ENCODE measurements at regions of chr7 and their contacts with region 1.

Region 1: DNA sequence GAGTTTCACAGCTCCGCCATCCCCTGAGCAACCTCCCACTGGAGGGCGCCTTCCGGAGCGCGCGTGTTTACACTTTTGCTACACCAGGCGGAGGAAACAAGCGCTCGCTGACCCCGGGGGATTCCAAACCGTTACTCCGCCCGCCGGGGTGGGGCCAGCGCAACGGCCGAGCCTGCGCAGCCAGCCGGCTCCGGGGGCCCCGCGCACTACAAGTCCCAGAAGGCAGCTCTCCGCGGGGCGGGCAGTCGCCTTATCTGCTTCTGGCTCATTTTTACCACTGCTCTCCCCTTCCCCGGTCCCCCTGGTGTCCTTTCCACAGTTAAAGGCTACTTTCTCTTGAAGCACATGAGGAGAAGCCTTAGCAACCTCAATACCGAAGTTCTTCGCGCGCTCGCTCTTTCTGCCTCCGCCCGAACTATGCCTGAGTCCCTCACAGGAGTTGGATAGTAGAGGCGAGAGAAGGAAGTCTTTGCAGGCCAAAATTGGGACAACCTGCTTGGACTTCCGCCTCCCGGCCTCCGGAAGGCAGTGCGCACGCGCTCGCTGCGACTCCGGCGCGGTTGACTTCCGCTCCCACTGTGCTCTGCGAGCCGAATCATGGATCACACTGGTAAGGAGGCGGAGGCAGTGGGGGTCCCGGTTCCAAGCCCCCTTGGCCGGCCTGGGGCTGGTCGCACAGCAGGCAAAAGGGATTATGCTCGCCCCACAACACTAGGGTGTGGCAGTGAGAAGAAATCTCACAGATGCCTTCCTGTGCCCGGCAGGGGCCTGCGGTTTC is at the start of gene CBLL1:
- DNase-seq: peak; percentile 95 to 98 (median 97)
- ATAC-seq: peak; percentile 95
- H3K4me3 ChIP-seq: peak within 1 kb of the TSS; percentile 90
- H3K4me3 Mint-ChIP-seq: peak within 1 kb of the TSS; percentile 93 to 100 (median 98)
- H3K27ac ChIP-seq: peak within 1 kb of the TSS; percentile 99
- H3K27ac Mint-ChIP-seq: peak within 1 kb of the TSS; percentile 99 to 100 (median 100)
- H3K4me1 ChIP-seq: peaks cover 35 to 36% of the 10 kb centered on the region in 2 donors
- H3K4me1 Mint-ChIP-seq: peaks cover 28 to 58% (median 54%) of the 10 kb centered on the region in 7 donors
- H3K27me3 ChIP-seq: no peaks in the 10 kb centered on the region
- H3K27me3 Mint-ChIP-seq: peaks cover 0 to 3% (median 0%) of the 10 kb centered on the region in 5 donors
- total RNA-seq, gene CBLL1: 41.5 to 54.4 (median 51.1) TPM

Region 2: GRCh38 chr7:107044347-107045194 is 699.2 kb before region 1 on chr7 and contains the start of gene PRKAR2B:
- CTCF ChIA-PET with region 1: no interaction called
- POLR2A ChIA-PET with region 1: no interaction called
- intact Hi-C with region 1: loop called in 1 of 2 experiments (anchors 1 kb)
- DNase-seq: peak; percentile 69 to 81 (median 79)
- ATAC-seq: peak; percentile 96
- H3K4me3 ChIP-seq: peak within 1 kb of the TSS; percentile 53
- H3K4me3 Mint-ChIP-seq: peak within 1 kb of the TSS; percentile 78 to 96 (median 90)
- H3K27ac ChIP-seq: peak within 1 kb of the TSS; percentile 33
- H3K27ac Mint-ChIP-seq: peak within 1 kb of the TSS in 7 of 9 donors; percentile 48 to 89 (median 77)
- H3K4me1 ChIP-seq: peaks cover 4 to 10% of the 10 kb centered on the region in 2 donors
- H3K4me1 Mint-ChIP-seq: peaks cover 11 to 19% (median 15%) of the 10 kb centered on the region in 7 donors
- H3K27me3 ChIP-seq: peaks cover 4 to 8% of the 10 kb centered on the region in 2 donors
- H3K27me3 Mint-ChIP-seq: peaks cover 13 to 47% (median 29%) of the 10 kb centered on the region in 5 donors
- total RNA-seq, gene PRKAR2B: 0.43 to 5.0 (median 0.67) TPM

Region 3: DNA sequence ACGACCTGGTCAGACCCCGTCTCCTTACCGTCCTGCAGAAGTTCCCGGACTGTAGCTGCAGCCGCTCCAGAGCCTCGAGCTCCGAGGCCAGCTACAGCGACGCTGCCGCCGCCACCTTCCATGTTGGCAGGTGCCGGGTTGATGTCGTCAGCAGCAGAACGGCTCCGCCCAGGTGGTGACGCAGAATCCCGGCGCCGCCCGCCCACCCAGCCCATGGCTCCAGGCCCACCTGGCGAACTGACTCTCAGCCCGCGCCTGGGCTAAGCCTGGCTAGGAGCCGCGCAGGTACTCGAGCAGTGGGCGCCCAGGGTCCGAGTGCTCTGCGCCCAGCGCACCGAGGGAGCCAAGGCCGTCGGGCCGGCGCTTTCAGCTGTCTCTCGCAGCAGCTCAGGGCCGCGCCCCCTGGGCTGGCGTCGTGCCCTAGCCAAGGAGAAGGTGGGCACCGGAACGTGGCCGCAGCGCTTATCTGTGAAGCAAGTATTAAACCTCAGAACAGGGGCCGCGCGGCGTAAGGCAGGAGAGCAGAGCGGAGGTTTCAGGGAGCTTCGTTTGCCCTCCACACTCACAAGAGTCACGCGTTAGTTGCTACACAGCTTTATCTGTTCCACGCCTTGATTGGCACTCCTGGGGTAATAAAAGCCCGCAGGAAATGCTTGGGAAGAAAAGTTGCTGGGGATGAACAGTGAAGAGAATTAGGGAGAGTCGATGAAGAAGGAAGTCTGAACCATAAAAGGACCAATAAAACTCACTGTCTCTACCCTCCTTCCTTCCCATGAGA is 179.8 kb before region 1 on chr7 and contains the starts of genes COG5 and DUS4L:
- CTCF ChIA-PET with region 1: interaction called, 4 read pairs
- POLR2A ChIA-PET with region 1: interaction called, 15 read pairs
- intact Hi-C with region 1: loop called (anchors 1 kb)
- DNase-seq: peak; percentile 78 to 88 (median 84)
- ATAC-seq: peak; percentile 91
- H3K4me3 ChIP-seq: peak within 1 kb of the TSS; percentile 86
- H3K4me3 Mint-ChIP-seq: peak within 1 kb of the TSS; percentile 76 to 99 (median 91)
- H3K27ac ChIP-seq: peak within 1 kb of the TSS; percentile 98
- H3K27ac Mint-ChIP-seq: peak within 1 kb of the TSS; percentile 87 to 97 (median 93)
- H3K4me1 ChIP-seq: peaks cover 40 to 50% of the 10 kb centered on the region in 2 donors
- H3K4me1 Mint-ChIP-seq: peaks cover 40 to 76% (median 62%) of the 10 kb centered on the region in 7 donors
- H3K27me3 ChIP-seq: no peaks in the 10 kb centered on the region
- H3K27me3 Mint-ChIP-seq: no peaks in the 10 kb centered on the region
- total RNA-seq, gene COG5: 38.3 to 77.0 (median 60.7) TPM
- total RNA-seq, gene DUS4L: 10.0 to 14.1 (median 11.2) TPM

Region 4: GRCh38 chr7:107725151-107725740 is 18.5 kb before region 1 on chr7:
- CTCF ChIA-PET with region 1: interaction called, 5 read pairs
- POLR2A ChIA-PET with region 1: interaction called, 3 read pairs
- intact Hi-C with region 1: loop called in 1 of 2 experiments (anchors 1 kb)
- DNase-seq: peak in 7 of 9 donors; percentile 23 to 56 (median 46)
- ATAC-seq: no peak
- H3K4me3 ChIP-seq: no peak overlapping the region
- H3K4me3 Mint-ChIP-seq: no peak overlapping the region
- H3K27ac ChIP-seq: no peak overlapping the region
- H3K27ac Mint-ChIP-seq: no peak overlapping the region
- H3K4me1 ChIP-seq: no peaks in the 10 kb centered on the region
- H3K4me1 Mint-ChIP-seq: no peaks in the 10 kb centered on the region
- H3K27me3 ChIP-seq: peaks cover 0 to 3% of the 10 kb centered on the region in 2 donors
- H3K27me3 Mint-ChIP-seq: peaks cover 9 to 29% (median 17%) of the 10 kb centered on the region in 5 donors

Region 5: DNA sequence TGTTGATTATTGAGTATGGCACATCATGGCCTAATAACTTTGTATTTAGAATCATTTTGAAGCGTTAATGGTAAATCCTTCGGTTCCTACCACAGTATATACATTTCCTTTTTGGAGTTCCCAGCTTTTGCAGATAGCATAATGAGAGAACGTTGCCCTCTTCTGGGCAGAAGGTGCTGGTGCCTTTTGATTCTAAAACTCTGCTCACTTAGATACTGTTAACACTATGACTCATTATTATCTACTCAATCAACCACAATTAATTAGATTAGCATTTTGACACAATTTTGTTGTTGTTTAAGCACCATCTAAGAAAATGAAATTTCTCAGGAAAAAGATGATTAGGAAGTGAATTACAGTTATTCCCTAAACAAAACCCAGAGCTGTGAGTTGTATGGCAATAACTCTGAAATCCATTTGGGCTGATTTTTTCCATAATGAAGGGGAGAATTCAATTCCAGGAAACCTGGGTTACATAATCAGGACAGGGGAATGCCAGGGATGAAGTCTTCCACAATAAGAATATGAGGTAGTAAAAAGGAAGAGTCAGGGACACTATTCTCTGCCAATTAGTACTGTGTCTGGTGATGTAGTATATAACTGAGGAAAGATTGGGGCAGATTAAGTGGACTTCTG is 135.8 kb after region 1 on chr7:
- CTCF ChIA-PET with region 1: interaction called, 89 read pairs
- POLR2A ChIA-PET with region 1: interaction called, 38 read pairs
- intact Hi-C with region 1: loop called (anchors 1 kb)
- DNase-seq: peak in 5 of 9 donors; percentile 30 to 50 (median 42)
- ATAC-seq: peak; percentile 85
- H3K4me3 ChIP-seq: no peak overlapping the region
- H3K4me3 Mint-ChIP-seq: no peak overlapping the region
- H3K27ac ChIP-seq: no peak overlapping the region
- H3K27ac Mint-ChIP-seq: peak overlapping the region in 1 of 9 donors; percentile 53
- H3K4me1 ChIP-seq: peaks cover 3 to 11% of the 10 kb centered on the region in 2 donors
- H3K4me1 Mint-ChIP-seq: peaks cover 5 to 34% (median 24%) of the 10 kb centered on the region in 7 donors
- H3K27me3 ChIP-seq: peaks cover 0 to 4% of the 10 kb centered on the region in 2 donors
- H3K27me3 Mint-ChIP-seq: peaks cover 0 to 23% (median 9%) of the 10 kb centered on the region in 5 donors

Region 6: GRCh38 chr7:108459931-108460551 is 716.3 kb after region 1 on chr7:
- CTCF ChIA-PET with region 1: no interaction called
- POLR2A ChIA-PET with region 1: no interaction called
- intact Hi-C with region 1: loop called in 1 of 2 experiments (anchors 5 kb)
- DNase-seq: peak in 5 of 9 donors; percentile 15 to 40 (median 26)
- ATAC-seq: peak; percentile 28
- H3K4me3 ChIP-seq: no peak overlapping the region
- H3K4me3 Mint-ChIP-seq: peak overlapping the region in 1 of 10 donors; percentile 4
- H3K27ac ChIP-seq: no peak overlapping the region
- H3K27ac Mint-ChIP-seq: peak overlapping the region in 7 of 9 donors; percentile 2 to 68 (median 19)
- H3K4me1 ChIP-seq: peaks cover 0 to 23% of the 10 kb centered on the region in 2 donors
- H3K4me1 Mint-ChIP-seq: peaks cover 5 to 77% (median 64%) of the 10 kb centered on the region in 7 donors
- H3K27me3 ChIP-seq: no peaks in the 10 kb centered on the region
- H3K27me3 Mint-ChIP-seq: peaks cover 22 to 42% (median 23%) of the 10 kb centered on the region in 5 donors

Measured in naive thymus-derived CD4-positive, alpha-beta T cell (primary cell).